ENCODE measurements at regions of chr19 and their contacts with region 1.

Region 1: DNA sequence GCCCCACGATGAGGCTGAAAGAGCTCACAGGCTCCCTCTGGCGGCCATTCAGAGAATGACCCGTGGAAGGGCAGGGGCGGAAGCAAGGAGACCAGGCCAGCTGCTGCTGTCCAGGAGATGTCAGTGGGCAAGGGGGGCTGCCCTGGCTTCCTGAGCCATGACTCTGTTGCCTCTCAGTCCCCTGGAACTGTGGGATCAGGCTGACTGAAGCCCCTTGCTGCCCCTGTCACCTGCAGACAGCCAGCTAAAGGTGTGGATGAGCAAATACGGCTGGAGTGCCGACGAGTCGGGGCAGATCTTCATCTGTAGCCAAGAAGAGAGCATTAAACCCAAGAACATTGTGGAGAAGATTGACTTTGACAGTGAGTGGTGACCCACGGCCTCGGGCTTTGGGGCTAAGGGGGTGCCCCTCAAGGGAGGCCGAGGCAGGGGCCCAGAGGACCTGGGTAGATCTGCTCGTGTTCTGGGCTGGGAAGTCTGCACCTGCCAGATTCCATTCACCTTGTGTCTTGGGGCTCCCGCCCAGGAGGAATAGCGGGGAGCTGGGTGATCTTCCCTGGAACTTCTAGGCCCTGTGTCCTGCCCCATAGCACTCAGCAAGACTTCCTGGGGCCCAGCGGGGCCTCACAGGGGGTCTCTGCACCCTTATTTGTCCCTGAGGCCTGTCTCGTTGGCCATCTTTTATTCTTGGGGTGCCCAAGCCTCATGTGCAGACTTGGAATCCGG is 12.5 kb upstream of the ACTN4 start:
- DNase-seq: peak; percentile 67
- H3K4me3 ChIP-seq: no peak overlapping the region
- H3K27ac ChIP-seq: no peak overlapping the region
- H3K4me1 ChIP-seq: no peaks in the 10 kb centered on the region
- H3K27me3 ChIP-seq: no peaks in the 10 kb centered on the region

Region 2: GRCh38 chr19:38417544-38418506 is 217.1 kb before region 1 on chr19:
- in situ Hi-C with region 1: loop called (anchors 10 kb)
- DNase-seq: peak; percentile 46
- H3K4me3 ChIP-seq: peak overlapping the region; percentile 19; the same call in 1 of the 2 replicates
- H3K27ac ChIP-seq: no peak overlapping the region
- H3K4me1 ChIP-seq: no peaks in the 10 kb centered on the region
- H3K27me3 ChIP-seq: 0 out of 2 replicates have a peak, but pooled peaks cover 15% of the 10 kb centered on the region